Heart right ventricle (tissue), 16 donors: ENCODE measurements at regions of chr1 and their contacts with region 1.

Region 1: GRCh38 chr1:152141974-152142584 is 16.9 kb downstream of the RPTN start:
- DNase-seq: peak; percentile 13 to 53
- ATAC-seq: peak in 2 of 8 donors; percentile 49 to 60
- H3K4me3 ChIP-seq: no peak overlapping the region
- H3K27ac ChIP-seq: no peak overlapping the region
- H3K4me1 ChIP-seq: peaks cover 0 to 4% (median 0%) of the 10 kb centered on the region in 9 donors
- H3K27me3 ChIP-seq: peaks cover 0 to 31% (median 20%) of the 10 kb centered on the region in 7 donors
- CTCF ChIP-seq: peak; percentile 50 to 82 (median 70)

Region 2: GRCh38 chr1:152034646-152035405 is 107.3 kb before region 1 on chr1:
- intact Hi-C with region 1: no loop called
- DNase-seq: peak; percentile 27 to 48
- ATAC-seq: peak in 5 of 8 donors; percentile 13 to 52 (median 24)
- H3K4me3 ChIP-seq: peak overlapping the region; percentile 51 to 82 (median 66)
- H3K27ac ChIP-seq: peak overlapping the region; percentile 29 to 98 (median 94)
- H3K4me1 ChIP-seq: peaks cover 0 to 76% (median 22%) of the 10 kb centered on the region in 9 donors
- H3K27me3 ChIP-seq: no peaks in the 10 kb centered on the region
- CTCF ChIP-seq: peak; percentile 52 to 81 (median 67)

Region 3: GRCh38 chr1:152182431-152182830 is 40.4 kb after region 1 on chr1:
- intact Hi-C with region 1: loop called (anchors 1 to 5 kb)
- DNase-seq: no peak
- ATAC-seq: no peak
- H3K4me3 ChIP-seq: no peak overlapping the region
- H3K27ac ChIP-seq: no peak overlapping the region
- H3K4me1 ChIP-seq: peaks cover 0 to 8% (median 0%) of the 10 kb centered on the region in 9 donors
- H3K27me3 ChIP-seq: peaks cover 0 to 6% (median 0%) of the 10 kb centered on the region in 7 donors
- CTCF ChIP-seq: peak in 7 of 9 donors; percentile 36 to 59 (median 40)

Region 4: DNA sequence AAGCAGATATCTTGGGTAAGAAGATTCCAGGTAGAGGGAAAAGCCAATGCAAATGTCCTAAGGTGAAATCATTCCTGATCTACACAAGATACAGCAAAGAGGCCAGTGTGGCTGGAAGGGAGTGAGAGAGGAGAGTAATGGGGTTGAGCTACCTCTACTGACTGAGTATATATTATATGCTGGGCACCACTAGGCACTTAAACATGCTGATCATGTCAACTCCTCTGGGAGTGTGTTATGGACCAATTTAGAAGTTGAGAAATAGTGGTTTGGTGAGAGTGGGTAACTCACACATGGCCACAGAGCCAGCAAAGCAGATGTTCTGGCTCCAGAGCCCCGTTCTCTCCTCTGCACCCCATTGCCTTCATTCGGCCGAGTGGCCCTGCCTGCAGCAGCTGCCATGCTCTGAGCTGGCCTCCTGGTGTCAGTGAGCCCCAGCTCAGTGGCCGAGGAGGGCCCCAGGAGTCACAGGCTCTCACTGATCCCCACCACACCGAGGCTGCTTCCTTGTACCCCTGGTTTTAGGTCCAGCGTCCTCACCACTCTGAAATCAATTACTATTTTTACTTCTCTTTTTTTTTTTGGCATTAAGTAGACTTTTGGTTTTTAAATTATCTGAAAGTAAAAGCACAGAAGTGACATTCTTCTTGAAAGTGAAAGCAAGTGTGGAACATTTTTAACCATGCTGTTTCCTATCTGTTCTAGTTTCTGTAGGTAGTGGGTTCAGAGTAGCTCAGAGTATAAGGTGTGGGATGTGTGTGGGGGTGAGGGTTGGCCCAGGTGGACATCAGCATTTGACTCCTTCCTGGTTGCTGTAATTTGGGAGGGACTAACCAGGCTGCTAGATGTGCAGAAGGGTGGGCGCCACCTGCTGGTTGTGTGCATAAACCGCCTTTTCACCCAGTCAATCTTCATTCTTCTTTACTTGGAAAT is 317.8 kb after region 1 on chr1:
- intact Hi-C with region 1: loop called in 6 of 10 experiments (anchors 1 to 5 kb)
- DNase-seq: peak; percentile 55 to 79
- ATAC-seq: peak in 7 of 8 donors; percentile 51 to 77 (median 69)
- H3K4me3 ChIP-seq: peak overlapping the region in 4 of 10 donors; percentile 3 to 33 (median 24)
- H3K27ac ChIP-seq: peak overlapping the region in 3 of 10 donors; percentile 12 to 82 (median 16)
- H3K4me1 ChIP-seq: peaks cover 0 to 12% (median 4%) of the 10 kb centered on the region in 9 donors
- H3K27me3 ChIP-seq: peaks cover 0 to 3% (median 0%) of the 10 kb centered on the region in 7 donors
- CTCF ChIP-seq: peak; percentile 66 to 83 (median 77)